A673 (cell line): ENCODE measurements at regions of chr13 and their contacts with region 1.

Region 1: DNA sequence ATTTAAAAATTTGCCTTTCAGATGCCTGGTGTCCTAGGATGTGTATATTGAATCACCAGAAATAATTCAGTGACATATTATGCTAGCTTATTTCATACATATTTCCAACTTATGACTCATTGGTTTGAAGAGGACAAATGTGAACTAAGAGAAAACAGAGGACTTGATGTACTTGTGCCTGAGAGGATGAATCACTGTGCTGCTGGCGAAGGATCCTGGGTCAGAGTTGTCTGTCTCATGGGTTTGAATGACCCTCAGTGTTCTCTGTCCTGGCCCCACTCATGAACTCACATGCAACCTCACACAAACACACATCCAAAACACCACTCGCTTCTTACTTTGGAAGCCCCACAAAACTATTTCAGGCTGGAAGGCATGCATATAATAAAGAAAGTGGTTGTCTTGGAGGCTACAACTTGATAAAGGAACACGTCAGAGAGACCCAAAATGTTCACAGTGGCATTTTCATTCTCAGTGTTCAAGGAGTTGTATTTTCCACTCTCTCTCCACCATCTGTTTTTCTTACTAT is 129.0 kb upstream of the SPRY2 start:
- DNase-seq: peak; percentile 71
- H3K4me3 ChIP-seq: no peak overlapping the region
- H3K27ac ChIP-seq: no peak overlapping the region
- H3K4me1 ChIP-seq: peaks cover 18% of the 10 kb centered on the region
- H3K27me3 ChIP-seq: no peaks in the 10 kb centered on the region
- CTCF ChIP-seq: no peak

Region 2: DNA sequence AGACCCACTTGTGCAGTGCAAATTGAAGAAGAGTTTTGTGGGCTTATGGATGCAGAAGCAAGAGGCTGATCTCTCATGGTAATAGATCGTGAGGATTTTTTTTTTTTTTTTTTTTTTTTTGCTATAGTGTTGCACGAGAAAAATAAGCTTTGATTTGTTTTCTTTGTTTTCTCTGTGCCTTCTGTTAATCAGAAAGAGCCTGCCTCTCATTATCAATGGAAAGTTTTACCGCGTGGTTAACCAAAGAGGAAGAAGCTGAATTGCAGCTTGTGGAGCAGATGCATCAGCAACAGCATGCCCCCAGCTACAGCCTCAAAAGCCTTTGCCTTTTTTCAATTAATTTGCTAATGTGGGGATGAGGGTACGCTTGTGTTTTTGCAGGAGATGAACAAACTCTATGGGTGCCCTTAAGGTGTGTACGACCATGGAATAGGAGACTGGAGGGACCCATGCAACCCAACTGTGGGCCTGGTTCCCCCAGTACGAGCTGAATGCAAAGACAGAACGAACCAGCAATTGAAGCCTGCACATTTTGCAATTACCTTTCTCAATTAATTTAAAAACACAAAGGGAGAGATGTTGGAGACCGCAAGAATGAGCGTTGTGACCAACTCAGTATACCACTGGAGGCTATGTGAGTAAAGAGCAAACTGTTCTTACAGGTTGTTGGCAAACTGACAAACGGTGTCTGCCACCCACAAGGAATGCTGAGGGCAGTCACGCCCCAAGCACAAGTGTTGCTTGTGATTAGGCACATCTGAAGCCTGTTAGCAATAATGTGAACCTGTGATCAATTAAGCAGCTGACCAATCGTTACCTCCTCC is 70.4 kb before region 1 on chr13:
- CTCF ChIA-PET with region 1: no interaction called
- POLR2A ChIA-PET with region 1: interaction called, 19 read pairs
- intact Hi-C with region 1: no loop called
- DNase-seq: no peak
- H3K4me3 ChIP-seq: no peak overlapping the region
- H3K27ac ChIP-seq: no peak overlapping the region
- H3K4me1 ChIP-seq: no peaks in the 10 kb centered on the region
- H3K27me3 ChIP-seq: no peaks in the 10 kb centered on the region
- CTCF ChIP-seq: no peak